Mucosa of descending colon (tissue), 3 donors: ENCODE measurements at regions of chr1 and their contacts with region 1.

Region 1: DNA sequence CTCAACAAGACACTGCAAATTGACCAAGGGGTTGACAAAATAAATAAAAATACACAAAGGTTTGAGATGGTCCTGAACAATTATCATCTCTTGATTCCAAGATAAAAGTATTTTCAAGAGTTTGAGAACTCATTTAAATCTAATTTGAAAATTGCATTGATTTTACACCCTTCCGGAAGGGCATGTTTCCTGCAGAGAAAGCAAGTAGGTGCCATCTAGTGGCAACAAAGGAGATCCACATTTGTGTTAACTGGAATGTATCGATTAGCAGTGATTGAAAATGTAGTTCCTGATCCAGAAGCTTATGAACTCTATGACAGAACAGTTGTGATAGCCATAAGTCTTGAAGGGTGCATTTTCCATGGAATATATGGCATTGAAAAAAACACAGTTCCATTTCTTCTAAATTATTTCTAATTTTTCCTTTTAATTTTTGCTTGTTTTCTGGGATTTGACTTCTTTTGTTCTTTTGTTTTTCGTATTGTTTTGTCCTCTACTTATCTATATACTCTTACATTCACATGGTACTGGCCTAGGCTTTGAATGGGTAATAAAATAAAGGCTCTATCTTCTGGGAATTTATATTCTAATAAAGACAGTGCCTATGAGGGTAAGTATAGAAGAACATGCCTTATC is 143.7 kb downstream of the DNM3 start:
- DNase-seq: peak in 1 of 3 donors; percentile 17
- ATAC-seq: peak; percentile 67
- H3K4me3 ChIP-seq: no peak overlapping the region
- H3K4me1 ChIP-seq: peaks cover 3% of the 10 kb centered on the region
- CTCF ChIP-seq: no peak

Region 2: GRCh38 chr1:171644805-171645483 is 340.0 kb before region 1 on chr1:
- intact Hi-C with region 1: loop called in 1 of 2 experiments (anchors 10 kb)
- DNase-seq: peak; percentile 55 to 88 (median 72)
- ATAC-seq: peak; percentile 97
- H3K4me3 ChIP-seq: no peak overlapping the region
- H3K4me1 ChIP-seq: no peaks in the 10 kb centered on the region
- CTCF ChIP-seq: peak; percentile 60

Region 3: DNA sequence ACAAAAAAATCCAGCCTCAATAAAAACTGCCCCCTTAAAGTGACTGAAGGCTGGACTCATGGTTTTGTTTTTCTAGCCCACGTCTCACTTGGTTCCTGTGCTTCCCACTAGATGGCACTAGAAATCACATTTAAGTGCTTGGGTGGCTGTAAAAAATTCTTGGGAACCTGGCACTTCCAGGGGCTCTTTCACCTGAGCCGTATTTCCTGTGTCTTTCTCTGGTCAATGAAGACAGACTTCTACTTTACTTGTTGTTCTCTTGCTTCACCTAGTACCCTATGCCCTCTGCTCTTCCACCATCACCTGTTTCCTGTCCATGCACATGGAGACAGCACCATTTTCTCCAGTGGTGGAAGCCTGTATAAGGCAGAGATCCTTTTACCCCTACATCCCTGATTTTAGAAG is 183.5 kb before region 1 on chr1:
- intact Hi-C with region 1: loop called (anchors 2 to 5 kb)
- DNase-seq: peak in 1 of 3 donors; percentile 54
- ATAC-seq: peak; percentile 60
- H3K4me3 ChIP-seq: no peak overlapping the region
- H3K4me1 ChIP-seq: no peaks in the 10 kb centered on the region
- CTCF ChIP-seq: peak; percentile 33